Heart left ventricle (tissue), 16 donors: ENCODE measurements at regions of chr16 and their contacts with region 1.

Region 1: GRCh38 chr16:2513405-2514322 is at the start of gene ATP6V0C:
- DNase-seq: peak; percentile 91 to 96 (median 92)
- ATAC-seq: peak; percentile 71 to 90 (median 88)
- H3K4me3 ChIP-seq: peak within 1 kb of the TSS; percentile 87 to 100 (median 96)
- H3K27ac ChIP-seq: peak within 1 kb of the TSS; percentile 93 to 99 (median 95)
- H3K4me1 ChIP-seq: peaks cover 11 to 80% (median 44%) of the 10 kb centered on the region in 12 donors
- H3K27me3 ChIP-seq: no peaks in the 10 kb centered on the region
- CTCF ChIP-seq: no peak
- POLR2A ChIP-seq: peak; percentile 10 to 90
- total RNA-seq, gene ATP6V0C: 61.6 to 209 (median 129) TPM

Region 2: GRCh38 chr16:2267913-2268666 is 245.6 kb before region 1 on chr16 and contains the start of gene RNPS1:
- intact Hi-C with region 1: loop called in 2 of 10 experiments (anchors 10 kb)
- DNase-seq: peak; percentile 96 to 98 (median 97)
- ATAC-seq: peak; percentile 93 to 98 (median 97)
- H3K4me3 ChIP-seq: peak within 1 kb of the TSS; percentile 65 to 98 (median 86)
- H3K27ac ChIP-seq: peak within 1 kb of the TSS; percentile 88 to 100 (median 96)
- H3K4me1 ChIP-seq: peaks cover 4 to 49% (median 24%) of the 10 kb centered on the region in 12 donors
- H3K27me3 ChIP-seq: no peaks in the 10 kb centered on the region
- CTCF ChIP-seq: peak in 1 of 12 donors; percentile 17
- POLR2A ChIP-seq: peak; percentile 58 to 92
- total RNA-seq, gene RNPS1: 100 to 154 (median 120) TPM

Region 3: GRCh38 chr16:2537453-2538379 is 24.1 kb after region 1 on chr16 and contains the start of gene PDPK1:
- intact Hi-C with region 1: loop called in 1 of 10 experiments (anchors 1 kb)
- DNase-seq: peak; percentile 95 to 98 (median 96)
- ATAC-seq: peak; percentile 90 to 96 (median 94)
- H3K4me3 ChIP-seq: peak within 1 kb of the TSS; percentile 64 to 93 (median 79)
- H3K27ac ChIP-seq: peak within 1 kb of the TSS; percentile 70 to 95 (median 91)
- H3K4me1 ChIP-seq: peaks cover 4 to 61% (median 36%) of the 10 kb centered on the region in 12 donors
- H3K27me3 ChIP-seq: no peaks in the 10 kb centered on the region
- CTCF ChIP-seq: no peak
- POLR2A ChIP-seq: peak in 1 of 2 donors; percentile 50
- total RNA-seq, gene PDPK1: 29.1 to 54.1 (median 40.4) TPM